Panc1 (cell line): ENCODE measurements at regions of chrX and their contacts with region 1.

Region 1: GRCh38 chrX:134552351-134552750 is 92.4 kb downstream of the HPRT1 start:
- DNase-seq: no peak
- ATAC-seq: no peak
- H3K4me3 ChIP-seq: no peak overlapping the region
- H3K27ac ChIP-seq: peak overlapping the region; percentile 19
- H3K4me1 ChIP-seq: peaks cover 37% of the 10 kb centered on the region
- H3K27me3 ChIP-seq: no peaks in the 10 kb centered on the region
- CTCF ChIP-seq: no peak

Region 2: GRCh38 chrX:134484039-134484438 is 68.3 kb before region 1 on chrX:
- CTCF ChIA-PET with region 1: no interaction called
- POLR2A ChIA-PET with region 1: interaction called, 10 read pairs
- in situ Hi-C with region 1: no loop called
- intact Hi-C with region 1: no loop called
- DNase-seq: peak; percentile 43
- ATAC-seq: peak; percentile 34; the same call in 1 of the 2 replicates
- H3K4me3 ChIP-seq: no peak overlapping the region
- H3K27ac ChIP-seq: no peak overlapping the region
- H3K4me1 ChIP-seq: no peaks in the 10 kb centered on the region
- H3K27me3 ChIP-seq: no peaks in the 10 kb centered on the region
- CTCF ChIP-seq: peak; percentile 71